Vagina (tissue), 2 donors: ENCODE measurements at regions of chr9 and their contacts with region 1.

Region 1: DNA sequence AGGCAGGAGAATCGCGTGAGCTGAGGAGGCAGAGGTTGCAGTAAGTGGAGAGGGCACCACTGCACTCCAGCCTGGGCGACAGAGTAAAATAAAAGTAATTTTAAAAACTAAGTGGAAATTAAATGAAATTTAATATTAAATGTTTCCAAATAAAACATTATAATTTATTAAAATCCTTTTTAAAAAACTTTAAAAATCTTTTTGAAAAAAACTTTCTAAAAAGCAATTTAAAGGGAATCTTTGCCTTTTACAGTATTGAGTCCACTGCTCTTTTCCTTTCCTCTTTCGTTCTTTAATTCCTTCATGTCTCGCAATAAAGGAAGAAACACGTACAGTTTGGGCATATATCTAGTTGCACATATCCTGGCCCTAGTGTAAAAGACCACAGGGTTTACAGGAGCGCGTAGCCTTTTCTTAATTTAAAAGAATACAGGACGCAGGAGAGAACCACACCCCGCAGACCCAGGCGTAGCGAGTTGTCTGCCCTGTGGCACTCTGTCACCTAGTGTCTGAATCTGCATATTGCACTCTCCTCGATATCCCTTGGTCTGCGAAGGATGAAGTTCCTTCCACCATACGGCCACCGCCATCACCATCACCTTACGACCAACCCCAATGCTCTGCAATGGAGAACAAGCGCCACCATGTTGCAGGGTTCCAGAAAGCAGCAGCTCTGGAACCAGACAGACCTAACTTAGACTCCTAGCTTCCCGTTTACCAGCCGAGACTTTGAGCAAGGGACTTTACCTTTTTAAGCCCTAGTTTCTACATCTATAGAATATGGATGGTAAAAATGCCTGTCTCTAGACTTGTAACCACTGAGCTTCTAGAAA is 77.6 kb upstream of the DMRT1 start:
- DNase-seq: no peak
- H3K4me3 ChIP-seq: no peak overlapping the region
- H3K27ac ChIP-seq: no peak overlapping the region
- H3K4me1 ChIP-seq: peaks cover 20% of the 10 kb centered on the region
- H3K27me3 ChIP-seq: no peaks in the 10 kb centered on the region
- CTCF ChIP-seq: peak; percentile 90 to 94 (median 92)
- POLR2A ChIP-seq: no peak

Region 2: DNA sequence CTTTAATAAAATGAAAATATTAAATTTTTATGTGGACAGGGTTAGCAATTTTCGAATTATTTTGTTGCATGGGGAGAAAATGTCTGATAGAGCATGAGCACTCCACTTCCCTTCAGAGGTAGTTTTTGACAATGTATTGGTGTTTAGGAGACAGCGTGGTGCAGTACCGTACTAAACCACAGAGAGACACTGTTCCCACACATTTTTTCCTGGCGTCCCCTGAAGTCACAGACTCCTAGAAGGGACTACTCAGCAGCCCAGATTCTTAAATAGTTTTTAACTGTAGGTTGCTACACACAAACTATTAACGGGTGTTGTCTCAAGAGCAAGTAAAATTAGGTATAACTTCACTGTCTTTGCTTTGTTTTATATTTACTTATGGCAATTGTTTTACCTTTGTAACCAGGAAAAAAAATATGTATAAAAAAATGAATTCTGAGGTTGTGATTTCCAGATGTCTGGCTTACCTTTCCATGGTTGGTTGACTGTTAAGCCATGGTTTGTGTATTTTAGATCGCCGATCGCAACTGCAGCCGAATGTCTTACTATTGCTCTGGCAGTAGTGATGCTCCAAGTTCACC is 378.0 kb before region 1 on chr9:
- intact Hi-C with region 1: loop called (anchors 10 kb)
- DNase-seq: no peak
- H3K4me3 ChIP-seq: no peak overlapping the region
- H3K27ac ChIP-seq: no peak overlapping the region
- H3K4me1 ChIP-seq: no peaks in the 10 kb centered on the region
- H3K27me3 ChIP-seq: no peaks in the 10 kb centered on the region
- CTCF ChIP-seq: peak; percentile 71 to 84 (median 73)
- POLR2A ChIP-seq: no peak

Region 3: GRCh38 chr9:613771-614347 is 150.0 kb before region 1 on chr9:
- intact Hi-C with region 1: loop called (anchors 5 kb)
- DNase-seq: no peak
- H3K4me3 ChIP-seq: no peak overlapping the region
- H3K27ac ChIP-seq: peak overlapping the region; percentile 71
- H3K4me1 ChIP-seq: peaks cover 31% of the 10 kb centered on the region
- H3K27me3 ChIP-seq: no peaks in the 10 kb centered on the region
- CTCF ChIP-seq: peak; percentile 65 to 88 (median 80)
- POLR2A ChIP-seq: no peak

Region 4: DNA sequence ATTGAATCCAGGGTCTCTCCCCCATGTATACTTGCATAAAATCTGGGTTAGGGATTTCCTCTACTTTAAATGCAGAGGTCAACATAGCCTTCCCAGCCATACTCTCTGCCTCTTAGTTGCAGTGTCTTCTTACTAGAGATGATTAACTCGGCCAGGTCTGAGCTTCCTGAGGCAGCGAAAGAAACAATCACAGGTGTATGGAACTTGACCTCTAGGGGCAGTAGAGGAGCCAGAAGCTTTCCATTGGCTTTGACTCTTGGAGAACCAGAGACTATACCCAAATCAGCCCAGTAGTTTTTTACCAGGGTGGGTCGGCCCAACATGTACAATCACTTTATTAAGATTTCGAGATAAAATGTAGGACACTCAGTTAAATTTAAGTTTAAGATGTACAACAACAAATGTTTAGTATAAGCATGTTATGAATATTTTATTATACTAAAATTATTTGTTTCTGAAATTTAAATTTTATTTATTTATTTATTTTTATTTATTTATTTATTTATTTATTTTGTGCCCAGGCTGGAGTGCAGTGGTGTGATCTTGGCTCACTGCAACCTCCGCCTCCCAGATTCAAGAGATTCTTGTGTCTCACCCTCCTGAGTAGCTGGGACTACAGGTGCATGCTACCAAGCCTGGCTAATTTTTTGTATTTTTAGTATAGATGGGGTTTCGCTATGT is 164.6 kb after region 1 on chr9:
- intact Hi-C with region 1: no loop called
- DNase-seq: no peak
- H3K4me3 ChIP-seq: no peak overlapping the region
- H3K27ac ChIP-seq: no peak overlapping the region
- H3K4me1 ChIP-seq: no peaks in the 10 kb centered on the region
- H3K27me3 ChIP-seq: no peaks in the 10 kb centered on the region
- CTCF ChIP-seq: no peak
- POLR2A ChIP-seq: no peak